Ovary (tissue), 10 donors: ENCODE measurements at regions of chr14 and their contacts with region 1.

Region 1: GRCh38 chr14:68795597-68796417 is 2.9 kb upstream of the ZFP36L1 start:
- DNase-seq: peak; percentile 82 to 90 (median 87)
- H3K4me3 ChIP-seq: peak overlapping the region; percentile 85
- H3K27ac ChIP-seq: peak overlapping the region; percentile 98 to 100
- H3K4me1 ChIP-seq: peaks cover 5% of the 10 kb centered on the region
- H3K27me3 ChIP-seq: no peaks in the 10 kb centered on the region
- CTCF ChIP-seq: peak; percentile 88 to 99 (median 98)
- EP300 ChIP-seq: peak; percentile 8
- POLR2A ChIP-seq: peak; percentile 71

Region 2: DNA sequence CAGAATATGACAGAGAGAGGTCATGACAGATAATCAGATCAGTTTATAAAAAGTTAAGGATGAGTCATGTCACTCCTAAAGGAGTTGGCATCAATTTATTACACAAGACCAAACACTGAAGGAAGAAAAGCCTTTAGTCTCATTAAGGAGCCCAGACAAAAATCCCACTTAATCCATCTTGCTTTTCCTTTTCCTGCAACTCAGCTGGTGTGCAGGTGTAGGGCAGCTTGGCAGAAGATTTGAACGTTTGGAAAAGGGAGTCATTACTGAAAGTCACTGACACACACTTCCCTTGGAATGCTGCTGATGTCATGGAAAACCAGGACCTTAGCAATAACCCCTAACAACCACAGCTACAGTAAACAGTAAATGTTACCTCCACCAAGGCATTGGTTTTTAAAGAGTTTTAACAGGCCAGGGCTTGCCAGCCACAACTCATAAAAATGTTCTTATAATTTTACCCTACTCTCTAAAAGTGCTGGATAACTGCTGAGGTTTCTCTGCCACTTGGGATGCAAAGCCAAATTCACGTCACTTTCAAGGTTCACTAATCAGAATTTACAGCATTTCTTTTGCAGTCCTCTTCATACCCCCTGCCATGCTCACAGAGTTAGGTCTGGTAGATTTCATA is 655.6 kb before region 1 on chr14:
- intact Hi-C with region 1: loop called in 1 of 4 experiments (anchors 10 kb)
- DNase-seq: peak in 4 of 5 donors; percentile 39 to 84 (median 67)
- H3K4me3 ChIP-seq: no peak overlapping the region
- H3K27ac ChIP-seq: peak overlapping the region in 1 of 2 donors; percentile 81
- H3K4me1 ChIP-seq: peaks cover 25% of the 10 kb centered on the region
- H3K27me3 ChIP-seq: no peaks in the 10 kb centered on the region
- CTCF ChIP-seq: no peak
- EP300 ChIP-seq: peak; percentile 82
- POLR2A ChIP-seq: no peak

Region 3: DNA sequence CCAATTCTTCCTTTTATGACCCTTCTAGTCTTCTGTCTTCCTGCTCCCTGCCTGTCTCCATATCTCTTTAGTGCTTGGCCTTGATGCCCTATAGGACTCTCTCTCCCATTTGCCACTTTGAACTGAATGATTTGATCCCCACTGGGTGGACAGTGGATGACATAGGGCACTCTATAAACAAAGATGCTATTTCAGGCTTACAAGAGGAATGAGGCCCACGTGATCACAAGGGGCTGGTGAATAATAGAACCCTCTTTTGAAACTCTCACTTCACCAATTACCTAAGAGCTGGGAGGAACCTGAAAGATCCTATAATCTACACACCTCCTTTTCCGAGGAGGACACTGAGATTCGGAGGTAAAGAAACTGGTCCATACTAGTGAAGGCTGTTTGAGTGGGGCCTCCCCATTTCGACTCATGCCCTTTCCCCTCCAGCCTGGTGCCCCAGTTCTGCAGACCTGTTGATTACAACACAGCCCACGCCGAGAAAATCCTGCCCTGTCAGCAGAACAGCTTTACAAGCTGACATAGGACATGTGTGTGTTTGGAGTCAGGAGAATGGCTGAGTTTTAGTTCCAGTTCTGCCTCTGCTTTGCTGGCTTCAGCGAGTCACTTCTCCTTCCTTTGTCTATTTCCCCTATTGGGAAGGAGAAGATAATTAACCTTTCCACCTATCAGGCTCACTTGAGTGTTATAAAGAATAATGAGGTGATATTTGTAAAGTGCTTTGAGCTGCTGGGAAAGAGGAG is 403.2 kb before region 1 on chr14:
- intact Hi-C with region 1: loop called in 1 of 4 experiments (anchors 10 kb)
- DNase-seq: peak in 4 of 5 donors; percentile 65 to 75 (median 68)
- H3K4me3 ChIP-seq: no peak overlapping the region
- H3K27ac ChIP-seq: peak overlapping the region; percentile 17 to 76
- H3K4me1 ChIP-seq: peaks cover 43% of the 10 kb centered on the region
- H3K27me3 ChIP-seq: no peaks in the 10 kb centered on the region
- CTCF ChIP-seq: no peak
- EP300 ChIP-seq: no peak
- POLR2A ChIP-seq: no peak

Region 4: GRCh38 chr14:68520637-68521556 is 274.9 kb before region 1 on chr14:
- intact Hi-C with region 1: loop called in 1 of 4 experiments (anchors 5 kb)
- DNase-seq: no peak
- H3K4me3 ChIP-seq: no peak overlapping the region
- H3K27ac ChIP-seq: peak overlapping the region; percentile 74 to 75
- H3K4me1 ChIP-seq: peaks cover 49% of the 10 kb centered on the region
- H3K27me3 ChIP-seq: no peaks in the 10 kb centered on the region
- CTCF ChIP-seq: no peak
- EP300 ChIP-seq: no peak
- POLR2A ChIP-seq: no peak

Region 5: DNA sequence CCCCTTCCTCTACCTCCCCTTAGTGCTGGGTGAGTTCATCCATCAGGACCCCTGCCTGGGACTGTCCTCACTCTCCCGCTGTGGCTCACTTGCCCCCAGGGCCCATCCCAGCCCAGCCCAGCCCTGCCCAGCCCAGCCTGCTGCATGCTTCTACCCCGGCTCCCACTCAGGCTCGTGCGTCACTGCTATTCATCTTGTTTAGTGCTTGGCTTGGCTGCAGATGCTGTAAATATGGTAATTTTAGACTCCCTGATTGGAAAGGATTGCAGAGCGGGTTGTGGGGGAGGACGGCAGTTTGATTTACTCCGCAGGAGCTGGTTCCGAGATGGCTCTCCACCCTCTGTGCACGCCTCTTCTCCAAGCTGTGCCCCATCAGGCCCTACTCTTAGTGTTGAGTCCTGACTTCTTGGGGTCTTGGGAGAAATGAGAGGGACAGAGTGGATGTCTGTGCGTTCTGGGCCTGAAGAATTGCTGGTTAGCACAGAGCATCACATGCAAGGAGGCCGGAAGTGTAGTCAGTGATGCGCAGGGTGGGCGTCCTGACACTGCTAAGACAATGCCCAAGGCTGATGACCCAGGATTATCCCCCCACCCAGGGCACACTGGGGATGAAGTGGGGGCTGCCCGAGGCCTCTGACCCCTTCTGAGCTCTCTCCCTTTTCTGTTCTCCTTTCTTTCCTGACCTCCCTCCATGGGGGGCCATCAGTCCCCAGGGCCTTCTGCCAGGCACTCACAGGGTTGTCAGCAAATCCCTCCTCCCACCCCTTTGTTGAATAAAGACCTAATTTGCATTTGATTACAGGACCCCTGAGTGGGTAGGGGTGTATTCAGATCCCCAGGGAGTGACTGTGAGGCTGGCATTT is 247.4 kb before region 1 on chr14:
- intact Hi-C with region 1: loop called in 2 of 4 experiments (anchors 2 to 5 kb)
- DNase-seq: peak; percentile 89 to 96 (median 93)
- H3K4me3 ChIP-seq: no peak overlapping the region
- H3K27ac ChIP-seq: peak overlapping the region; percentile 78 to 92
- H3K4me1 ChIP-seq: peaks cover 40% of the 10 kb centered on the region
- H3K27me3 ChIP-seq: no peaks in the 10 kb centered on the region
- CTCF ChIP-seq: no peak
- EP300 ChIP-seq: peak; percentile 85
- POLR2A ChIP-seq: peak; percentile 49

Region 6: DNA sequence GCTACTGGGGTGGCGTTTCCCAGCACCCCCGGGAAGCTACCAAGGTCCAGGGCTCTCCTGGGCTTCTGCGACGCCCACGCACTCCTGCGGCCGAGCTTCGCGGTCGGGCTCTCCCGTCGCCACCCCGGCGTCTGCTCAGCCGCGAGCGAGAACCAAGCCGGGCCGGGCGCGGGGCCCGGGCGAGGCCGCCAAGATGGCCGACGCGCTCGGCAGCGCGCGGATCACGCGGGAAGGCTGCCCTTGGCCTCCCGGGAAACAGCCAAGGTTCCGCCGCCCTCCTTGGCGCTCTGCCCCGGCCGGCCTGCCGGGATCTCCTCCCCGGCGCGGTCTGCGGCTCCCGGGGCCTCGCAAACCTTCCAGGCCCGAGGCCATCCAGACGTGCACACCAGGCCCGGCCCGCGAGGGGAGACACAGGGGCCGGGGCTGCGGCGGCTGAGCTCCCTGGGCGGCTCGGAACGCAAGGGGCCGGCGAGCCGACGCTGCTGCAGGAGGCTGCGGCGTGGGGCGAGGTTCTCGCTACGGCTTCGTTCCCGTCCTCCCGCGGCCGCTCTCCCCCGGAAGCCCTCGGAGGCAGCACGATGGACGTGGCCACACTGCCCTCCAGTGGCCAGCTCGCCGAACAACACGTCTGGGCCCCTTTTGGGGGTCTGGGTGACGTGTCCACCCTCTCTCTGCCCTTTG is 20.6 kb after region 1 on chr14:
- intact Hi-C with region 1: loop called in 1 of 4 experiments (anchors 1 kb)
- DNase-seq: peak; percentile 92 to 96 (median 95)
- H3K4me3 ChIP-seq: peak overlapping the region; percentile 45
- H3K27ac ChIP-seq: peak overlapping the region; percentile 75 to 99
- H3K4me1 ChIP-seq: peaks cover 28% of the 10 kb centered on the region
- H3K27me3 ChIP-seq: no peaks in the 10 kb centered on the region
- CTCF ChIP-seq: peak; percentile 96 to 100 (median 98)
- EP300 ChIP-seq: no peak
- POLR2A ChIP-seq: peak; percentile 63